Heart right ventricle (tissue), 16 donors: ENCODE measurements at regions of chr11 and their contacts with region 1.

Region 1: GRCh38 chr11:131064373-131064991 is 148.2 kb upstream of the SNX19 start:
- DNase-seq: peak; percentile 31 to 51
- ATAC-seq: peak in 6 of 8 donors; percentile 49 to 71 (median 60)
- H3K4me3 ChIP-seq: no peak overlapping the region
- H3K27ac ChIP-seq: no peak overlapping the region
- H3K4me1 ChIP-seq: no peaks in the 10 kb centered on the region
- H3K27me3 ChIP-seq: peaks cover 0 to 76% (median 28%) of the 10 kb centered on the region in 7 donors
- CTCF ChIP-seq: peak; percentile 59 to 88 (median 76)

Region 2: GRCh38 chr11:130979386-130979972 is 85.0 kb before region 1 on chr11:
- intact Hi-C with region 1: no loop called
- DNase-seq: no peak
- ATAC-seq: no peak
- H3K4me3 ChIP-seq: no peak overlapping the region
- H3K27ac ChIP-seq: no peak overlapping the region
- H3K4me1 ChIP-seq: no peaks in the 10 kb centered on the region
- H3K27me3 ChIP-seq: peaks cover 0 to 8% (median 0%) of the 10 kb centered on the region in 7 donors
- CTCF ChIP-seq: peak in 8 of 9 donors; percentile 8 to 59 (median 45)

Region 3: DNA sequence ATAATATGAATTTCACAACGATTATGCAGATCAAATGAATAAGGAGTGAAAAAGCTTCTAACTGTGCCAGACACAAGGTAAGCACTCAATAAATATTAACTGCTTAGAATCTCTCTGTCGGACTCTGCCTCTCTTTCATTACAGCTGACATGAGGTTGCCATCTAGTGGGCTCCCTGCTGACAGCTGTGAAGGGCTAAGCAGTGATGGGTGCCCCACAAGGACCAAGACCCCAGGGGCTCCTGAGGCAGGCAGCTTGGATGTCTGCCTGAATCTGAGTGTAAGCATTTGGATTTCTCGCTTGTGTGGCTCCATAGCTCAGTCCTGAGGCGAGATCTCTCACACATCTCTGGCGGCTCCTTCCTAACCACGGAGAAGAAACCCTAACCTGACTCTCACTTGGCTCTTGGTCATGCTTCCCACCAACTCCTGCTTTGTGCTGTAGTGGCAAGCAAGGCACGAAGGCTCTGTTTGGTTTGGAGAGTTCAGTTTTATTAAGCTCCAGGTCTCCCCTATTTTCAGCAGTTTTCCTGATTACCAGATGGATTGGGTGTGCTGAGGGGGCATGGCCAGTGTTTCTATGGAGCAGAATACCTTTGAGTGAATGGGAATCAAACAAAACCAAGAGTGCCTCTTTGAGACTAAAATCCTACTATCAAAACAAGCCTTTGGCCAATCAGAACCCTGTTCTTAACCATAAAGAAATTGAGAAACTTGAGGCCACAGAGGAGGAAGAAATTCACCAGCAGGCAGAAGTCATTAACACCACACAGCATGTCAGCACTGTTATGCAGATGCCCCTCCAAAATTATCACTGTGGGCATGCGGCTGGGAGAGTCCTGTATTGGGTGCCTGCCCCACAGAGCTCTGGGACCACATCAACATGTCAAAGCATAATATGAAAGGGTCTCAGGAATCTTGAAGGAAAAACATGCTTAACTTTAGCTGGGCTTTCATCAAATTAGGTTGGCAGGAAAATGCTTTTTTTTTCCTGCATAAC is 153.1 kb after region 1 on chr11:
- intact Hi-C with region 1: loop called (anchors 2 to 10 kb)
- DNase-seq: no peak
- ATAC-seq: peak in 3 of 8 donors; percentile 33 to 45 (median 37)
- H3K4me3 ChIP-seq: no peak overlapping the region
- H3K27ac ChIP-seq: no peak overlapping the region
- H3K4me1 ChIP-seq: peaks cover 0 to 3% (median 0%) of the 10 kb centered on the region in 9 donors
- H3K27me3 ChIP-seq: peaks cover 0 to 13% (median 0%) of the 10 kb centered on the region in 7 donors
- CTCF ChIP-seq: peak in 8 of 9 donors; percentile 20 to 65 (median 38)

Region 4: GRCh38 chr11:131408025-131408640 is 343.7 kb after region 1 on chr11:
- intact Hi-C with region 1: no loop called
- DNase-seq: peak in 1 of 2 donors; percentile 24
- ATAC-seq: peak in 2 of 8 donors; percentile 12 to 68
- H3K4me3 ChIP-seq: no peak overlapping the region
- H3K27ac ChIP-seq: no peak overlapping the region
- H3K4me1 ChIP-seq: no peaks in the 10 kb centered on the region
- H3K27me3 ChIP-seq: peaks cover 0 to 10% (median 0%) of the 10 kb centered on the region in 7 donors
- CTCF ChIP-seq: peak in 7 of 9 donors; percentile 16 to 50 (median 43)

Region 5: DNA sequence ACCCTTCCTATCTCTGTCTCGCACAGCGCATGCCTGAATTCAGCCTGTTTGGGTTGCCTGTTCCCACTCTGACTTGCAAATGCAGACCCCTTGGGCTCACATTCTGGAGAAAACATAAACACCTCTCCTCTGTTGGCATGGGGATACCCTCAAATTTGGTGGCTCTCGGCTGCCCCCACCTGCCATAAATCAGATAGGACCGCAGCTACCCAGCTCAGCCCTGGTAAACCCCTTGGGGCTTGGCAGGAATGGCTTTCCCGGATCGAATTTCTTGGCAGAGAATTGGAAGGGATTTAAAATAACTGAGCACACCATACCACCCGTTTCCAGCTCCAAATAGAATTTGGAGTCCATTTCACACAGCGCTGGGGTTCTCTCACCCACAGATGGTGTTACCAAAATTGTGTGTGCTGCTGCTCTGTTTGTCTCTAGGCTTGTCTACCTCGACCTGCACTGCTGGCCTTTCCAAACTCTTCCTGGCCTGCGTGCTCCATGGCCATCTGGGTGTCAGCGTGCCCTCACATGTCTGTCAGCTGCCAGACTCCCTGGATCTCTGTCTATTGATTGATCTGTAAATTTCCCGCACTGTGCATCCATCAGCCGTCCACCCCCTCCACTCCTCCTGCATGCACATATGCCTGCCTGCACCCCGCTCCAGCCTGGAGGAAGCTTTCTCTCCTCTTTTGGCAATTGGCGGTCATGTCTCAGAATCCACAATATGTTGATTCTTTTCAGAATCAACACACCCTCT is 439.9 kb after region 1 on chr11:
- intact Hi-C with region 1: loop called in 1 of 10 experiments (anchors 10 kb)
- DNase-seq: no peak
- ATAC-seq: peak in 6 of 8 donors; percentile 41 to 86 (median 54)
- H3K4me3 ChIP-seq: no peak overlapping the region
- H3K27ac ChIP-seq: no peak overlapping the region
- H3K4me1 ChIP-seq: no peaks in the 10 kb centered on the region
- H3K27me3 ChIP-seq: peaks cover 0 to 30% (median 8%) of the 10 kb centered on the region in 7 donors
- CTCF ChIP-seq: peak in 7 of 9 donors; percentile 20 to 43 (median 29)

Region 6: DNA sequence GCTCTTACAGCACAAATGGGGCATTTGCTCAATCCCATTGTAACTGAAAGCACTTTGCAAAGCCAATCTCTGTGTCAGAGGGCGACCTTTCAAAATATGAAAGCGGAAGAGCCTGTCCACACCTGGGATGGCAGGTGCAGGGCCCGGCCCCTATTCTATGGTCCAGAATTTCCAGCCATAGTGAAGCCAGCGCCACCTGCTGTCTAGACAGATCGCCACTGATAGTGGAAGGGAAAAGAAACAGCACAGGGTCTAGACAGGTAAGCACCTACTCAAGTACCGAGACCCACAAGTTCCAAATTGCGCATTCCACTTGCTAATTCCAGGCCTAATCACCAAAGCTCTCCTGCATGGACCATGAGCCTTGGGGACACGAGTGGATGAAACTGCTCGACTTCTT is 447.3 kb after region 1 on chr11:
- intact Hi-C with region 1: loop called in 9 of 10 experiments (anchors 5 to 10 kb)
- DNase-seq: no peak
- ATAC-seq: no peak
- H3K4me3 ChIP-seq: no peak overlapping the region
- H3K27ac ChIP-seq: no peak overlapping the region
- H3K4me1 ChIP-seq: no peaks in the 10 kb centered on the region
- H3K27me3 ChIP-seq: peaks cover 0 to 6% (median 0%) of the 10 kb centered on the region in 7 donors
- CTCF ChIP-seq: peak in 8 of 9 donors; percentile 10 to 57 (median 46)

Region 7: DNA sequence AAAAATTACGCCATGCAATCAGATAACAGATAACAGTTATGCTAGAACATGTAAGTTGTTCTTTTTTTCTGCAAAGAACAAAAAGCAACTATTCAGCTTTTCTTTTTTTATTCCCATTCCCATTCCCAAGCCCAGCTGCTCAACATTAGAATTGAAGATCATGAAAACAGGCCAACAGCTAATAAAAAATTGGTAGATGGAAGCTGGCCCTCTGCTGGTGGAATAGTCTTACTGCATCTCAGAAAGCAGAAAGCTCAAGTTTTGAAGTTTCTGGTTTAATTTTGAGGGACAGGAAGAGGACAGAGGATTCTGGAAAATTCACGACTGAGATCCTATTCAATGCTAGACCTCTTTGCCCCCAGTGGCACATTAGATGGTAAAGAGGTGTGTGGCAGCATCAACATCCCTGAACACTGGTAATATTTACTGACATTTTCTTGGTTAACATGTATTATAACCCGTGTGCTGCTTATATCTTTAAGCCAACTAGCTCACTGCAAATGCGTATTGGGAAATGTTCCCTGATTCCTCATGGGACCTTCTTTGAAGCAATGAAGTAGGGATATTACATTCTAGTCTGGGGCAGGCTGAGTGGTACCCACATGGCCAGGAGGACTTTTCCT is 1876.7 kb after region 1 on chr11:
- intact Hi-C with region 1: loop called in 1 of 10 experiments (anchors 10 kb)
- DNase-seq: peak in 1 of 2 donors; percentile 22
- ATAC-seq: peak in 1 of 8 donors; percentile 23
- H3K4me3 ChIP-seq: no peak overlapping the region
- H3K27ac ChIP-seq: no peak overlapping the region
- H3K4me1 ChIP-seq: peaks cover 0 to 7% (median 4%) of the 10 kb centered on the region in 9 donors
- H3K27me3 ChIP-seq: peaks cover 14 to 51% (median 45%) of the 10 kb centered on the region in 7 donors
- CTCF ChIP-seq: peak; percentile 58 to 88 (median 80)